CD14-positive monocyte (primary cell): ENCODE measurements at regions of chr9 and their contacts with region 1.

Region 1: DNA sequence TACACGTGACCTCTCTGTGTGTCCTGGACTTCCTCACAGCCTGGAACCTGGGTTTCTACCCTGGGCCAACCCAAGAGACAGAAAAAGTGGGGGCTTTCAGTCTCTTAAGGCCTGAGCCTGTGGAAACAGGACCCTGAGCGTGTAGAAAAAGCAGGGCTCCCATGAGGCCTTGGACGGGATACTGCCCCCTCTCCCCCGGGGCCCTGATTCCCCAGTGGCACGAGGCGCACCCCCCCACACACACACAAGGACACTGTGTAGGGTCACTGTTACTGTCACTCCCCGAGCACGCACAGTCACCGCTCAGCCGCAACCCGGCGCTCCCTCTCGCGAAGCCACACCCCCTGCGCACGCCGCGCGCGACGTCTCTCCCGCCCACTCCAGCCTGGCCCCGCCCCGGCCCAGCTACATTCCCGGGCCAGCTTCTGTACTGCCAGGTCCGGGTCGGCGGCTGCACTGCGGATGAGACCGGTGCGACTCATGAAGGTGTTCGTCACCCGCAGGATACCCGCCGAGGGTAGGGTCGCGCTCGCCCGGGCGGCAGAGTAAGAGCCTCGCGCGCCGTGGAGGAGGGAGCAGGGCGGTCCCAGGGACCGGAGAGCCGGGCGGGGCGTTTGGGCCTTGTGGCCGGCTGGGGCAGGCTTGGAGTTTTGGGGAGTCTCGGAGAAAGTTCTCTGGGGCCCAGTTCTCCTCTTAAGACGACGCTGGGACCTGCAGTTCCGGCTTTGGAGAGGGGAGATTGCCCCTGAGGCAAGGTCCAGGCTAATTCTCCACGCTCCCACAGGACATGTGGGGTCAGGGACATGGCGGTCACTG is at the start of gene GRHPR:
- DNase-seq: peak; percentile 87 to 89 (median 87)
- H3K4me3 ChIP-seq: peak within 1 kb of the TSS; percentile 72 to 77 (median 72)
- H3K4me3 Mint-ChIP-seq: peak within 1 kb of the TSS; percentile 94 to 95
- H3K27ac ChIP-seq: peak within 1 kb of the TSS; percentile 81 to 92
- H3K27ac Mint-ChIP-seq: peak within 1 kb of the TSS; percentile 91 to 98 (median 97)
- H3K4me1 ChIP-seq: peaks cover 19 to 20% of the 10 kb centered on the region in 2 donors
- H3K4me1 Mint-ChIP-seq: peaks cover 19% of the 10 kb centered on the region
- H3K27me3 ChIP-seq: no peaks in the 10 kb centered on the region
- H3K27me3 Mint-ChIP-seq: peaks cover 0 to 4% (median 2%) of the 10 kb centered on the region in 3 donors
- CTCF ChIP-seq: no peak
- polyA plus RNA-seq, gene GRHPR: 73.8 to 96.6 (median 80.9) TPM

Region 2: GRCh38 chr9:37390759-37391158 is 31.7 kb before region 1 on chr9:
- intact Hi-C with region 1: no loop called
- DNase-seq: no peak
- H3K4me3 ChIP-seq: no peak overlapping the region
- H3K4me3 Mint-ChIP-seq: peak overlapping the region in 1 of 2 donors; percentile 63
- H3K27ac ChIP-seq: no peak overlapping the region
- H3K27ac Mint-ChIP-seq: no peak overlapping the region
- H3K4me1 ChIP-seq: no peaks in the 10 kb centered on the region
- H3K4me1 Mint-ChIP-seq: peaks cover 4% of the 10 kb centered on the region
- H3K27me3 ChIP-seq: no peaks in the 10 kb centered on the region
- H3K27me3 Mint-ChIP-seq: peaks cover 2 to 5% (median 4%) of the 10 kb centered on the region in 3 donors
- CTCF ChIP-seq: peak; percentile 17

Region 3: GRCh38 chr9:37485389-37486219 is 63.1 kb after region 1 on chr9 and contains the start of gene POLR1E:
- intact Hi-C with region 1: loop called in 1 of 2 experiments (anchors 2 kb)
- DNase-seq: peak; percentile 91 to 94 (median 93)
- H3K4me3 ChIP-seq: peak within 1 kb of the TSS; percentile 66 to 85 (median 75)
- H3K4me3 Mint-ChIP-seq: peak within 1 kb of the TSS; percentile 88 to 93
- H3K27ac ChIP-seq: peak within 1 kb of the TSS in 1 of 2 donors; percentile 56
- H3K27ac Mint-ChIP-seq: peak within 1 kb of the TSS; percentile 57 to 92 (median 74)
- H3K4me1 ChIP-seq: peaks cover 15 to 24% of the 10 kb centered on the region in 2 donors
- H3K4me1 Mint-ChIP-seq: peaks cover 23% of the 10 kb centered on the region
- H3K27me3 ChIP-seq: peaks cover 0 to 2% of the 10 kb centered on the region in 2 donors
- H3K27me3 Mint-ChIP-seq: peaks cover 4 to 10% (median 6%) of the 10 kb centered on the region in 3 donors
- CTCF ChIP-seq: no peak
- polyA plus RNA-seq, gene POLR1E: 2.3 to 4.1 (median 2.4) TPM

Region 4: DNA sequence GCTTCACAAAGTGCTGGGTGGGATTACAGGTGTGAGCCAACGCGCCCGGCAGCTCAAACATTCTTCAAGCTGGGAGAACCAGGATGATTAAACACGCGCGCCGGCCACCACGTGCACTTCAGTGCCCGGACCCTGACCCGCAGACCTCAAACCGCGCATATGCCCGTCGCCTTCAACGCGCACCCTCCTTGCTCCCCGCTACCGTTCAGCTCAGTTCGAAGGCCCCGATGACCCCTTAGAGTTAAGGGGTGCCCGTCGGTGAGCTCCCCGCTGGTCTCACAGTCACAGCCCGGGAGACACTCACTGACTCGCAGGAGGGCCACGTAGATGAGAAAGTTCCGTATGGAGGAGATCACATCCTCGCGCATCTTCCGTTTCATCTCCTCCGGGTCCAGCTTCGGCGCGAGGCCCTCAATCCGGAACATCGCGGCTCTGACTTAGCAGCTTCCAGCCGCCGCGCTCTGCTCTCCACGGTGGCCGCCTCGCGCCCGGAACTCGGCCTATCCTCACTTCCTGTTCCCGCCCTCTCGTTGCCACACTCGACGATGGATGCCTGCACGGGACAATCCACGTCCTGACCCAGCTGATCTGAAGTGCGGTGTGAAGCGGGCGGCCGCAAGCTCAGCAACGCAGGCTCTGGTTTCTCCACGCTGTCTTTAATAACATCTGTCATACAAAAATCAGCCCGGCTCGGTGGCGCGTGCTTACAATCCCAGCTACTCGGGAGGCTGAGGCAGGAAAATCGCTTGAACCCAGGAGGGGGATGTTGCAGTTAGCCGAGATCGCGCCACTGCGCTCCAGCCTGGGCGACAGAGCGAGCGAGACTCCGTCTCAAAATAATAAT is 169.8 kb after region 1 on chr9 and contains the start of gene TOMM5:
- intact Hi-C with region 1: loop called in 1 of 2 experiments (anchors 5 kb)
- DNase-seq: peak; percentile 86 to 93 (median 91)
- H3K4me3 ChIP-seq: peak within 1 kb of the TSS; percentile 63 to 94 (median 77)
- H3K4me3 Mint-ChIP-seq: peak within 1 kb of the TSS; percentile 98 to 99
- H3K27ac ChIP-seq: peak within 1 kb of the TSS; percentile 75 to 96
- H3K27ac Mint-ChIP-seq: peak within 1 kb of the TSS; percentile 94 to 98 (median 97)
- H3K4me1 ChIP-seq: peaks cover 28 to 32% of the 10 kb centered on the region in 2 donors
- H3K4me1 Mint-ChIP-seq: peaks cover 34% of the 10 kb centered on the region
- H3K27me3 ChIP-seq: peaks cover 0 to 4% of the 10 kb centered on the region in 2 donors
- H3K27me3 Mint-ChIP-seq: peaks cover 4 to 11% (median 7%) of the 10 kb centered on the region in 3 donors
- CTCF ChIP-seq: no peak
- polyA plus RNA-seq, gene TOMM5: 35.0 to 117 (median 112) TPM